ENCODE measurements at regions of chr1 and their contacts with region 1.

Region 1: DNA sequence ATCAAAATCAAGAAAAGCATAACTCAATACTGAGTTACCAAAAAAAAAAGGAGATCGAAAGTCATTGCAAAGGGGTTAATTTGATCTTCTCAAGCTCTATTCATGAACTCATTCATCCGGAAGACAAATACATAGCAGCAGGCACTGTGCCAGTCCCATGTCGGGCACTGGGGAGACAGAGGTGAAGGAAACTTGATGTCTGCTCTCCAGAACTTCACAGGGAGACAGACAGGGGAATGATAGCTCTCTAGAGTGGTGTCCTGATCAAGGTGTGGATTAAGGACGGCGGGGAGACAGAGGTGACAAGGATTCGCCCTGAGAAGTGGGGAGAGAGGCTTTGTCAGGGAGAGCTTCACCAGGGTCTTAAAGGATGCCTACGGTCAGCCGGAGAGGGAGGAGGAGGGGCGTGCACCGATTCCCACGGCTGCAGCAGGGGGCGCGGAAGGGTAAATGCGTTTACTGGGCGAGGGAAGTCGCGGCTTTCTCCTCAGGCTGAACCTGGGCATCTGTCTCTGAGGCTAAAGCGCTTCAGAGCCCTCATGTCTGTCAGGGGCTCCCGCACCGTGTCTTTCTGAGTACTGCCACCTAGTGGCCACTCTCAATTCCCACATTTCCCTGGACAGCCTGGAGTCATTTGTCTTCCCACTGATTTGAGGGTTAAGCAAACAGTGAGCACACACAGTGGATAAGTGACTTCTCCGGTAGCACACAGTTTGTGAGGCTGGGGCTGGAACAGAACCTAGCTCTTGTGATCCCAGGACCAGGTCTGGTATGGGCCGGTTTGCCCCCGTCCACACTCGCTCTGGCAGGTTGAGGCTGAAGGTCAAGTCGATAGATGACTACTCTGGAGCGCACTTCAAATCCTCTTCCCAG is 152.8 kb downstream of the TENT5C start:
- DNase-seq: peak in 1 of 2 donors; percentile 61
- H3K4me3 ChIP-seq: no peak overlapping the region
- CTCF ChIP-seq: peak in 1 of 3 donors; percentile 65
- POLR2A ChIP-seq: no peak

Region 2: GRCh38 chr1:117534995-117535467 is 223.6 kb before region 1 on chr1:
- intact Hi-C with region 1: loop called (anchors 10 kb)
- DNase-seq: no peak
- H3K4me3 ChIP-seq: no peak overlapping the region
- CTCF ChIP-seq: no peak
- POLR2A ChIP-seq: no peak

Region 3: DNA sequence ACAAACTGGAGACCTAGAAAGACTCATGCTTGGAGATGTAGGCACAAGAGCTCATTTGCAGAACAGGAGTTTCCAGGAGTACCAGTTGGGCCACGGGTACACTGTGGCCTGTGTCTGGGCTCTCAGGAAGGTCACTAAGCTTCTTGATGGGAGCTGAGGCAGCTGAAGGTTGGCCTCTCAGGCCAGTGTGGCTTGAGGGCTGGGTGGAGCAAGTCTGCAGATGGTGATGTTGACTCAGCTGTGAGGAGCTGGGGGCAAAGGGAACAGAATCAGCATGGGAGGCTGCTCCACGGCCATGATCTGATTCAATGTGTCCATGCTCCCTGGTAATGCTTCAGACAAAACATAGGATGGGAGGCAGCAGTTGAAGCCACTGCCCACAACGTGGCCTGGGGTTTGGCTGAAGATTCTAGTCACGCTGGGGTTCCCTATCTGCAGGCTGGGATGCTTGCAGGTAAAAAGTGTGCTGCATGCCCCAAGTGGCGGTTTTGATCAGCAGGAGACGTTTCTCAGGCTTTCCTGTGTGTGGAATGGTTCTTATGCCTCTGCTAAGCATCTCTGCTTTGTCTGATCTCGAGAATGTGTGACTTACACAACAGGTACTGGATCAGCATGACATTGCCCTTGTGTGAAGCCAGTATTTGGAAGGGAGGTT is 168.3 kb before region 1 on chr1:
- intact Hi-C with region 1: no loop called
- DNase-seq: no peak
- H3K4me3 ChIP-seq: no peak overlapping the region
- CTCF ChIP-seq: no peak
- POLR2A ChIP-seq: no peak

Region 4: DNA sequence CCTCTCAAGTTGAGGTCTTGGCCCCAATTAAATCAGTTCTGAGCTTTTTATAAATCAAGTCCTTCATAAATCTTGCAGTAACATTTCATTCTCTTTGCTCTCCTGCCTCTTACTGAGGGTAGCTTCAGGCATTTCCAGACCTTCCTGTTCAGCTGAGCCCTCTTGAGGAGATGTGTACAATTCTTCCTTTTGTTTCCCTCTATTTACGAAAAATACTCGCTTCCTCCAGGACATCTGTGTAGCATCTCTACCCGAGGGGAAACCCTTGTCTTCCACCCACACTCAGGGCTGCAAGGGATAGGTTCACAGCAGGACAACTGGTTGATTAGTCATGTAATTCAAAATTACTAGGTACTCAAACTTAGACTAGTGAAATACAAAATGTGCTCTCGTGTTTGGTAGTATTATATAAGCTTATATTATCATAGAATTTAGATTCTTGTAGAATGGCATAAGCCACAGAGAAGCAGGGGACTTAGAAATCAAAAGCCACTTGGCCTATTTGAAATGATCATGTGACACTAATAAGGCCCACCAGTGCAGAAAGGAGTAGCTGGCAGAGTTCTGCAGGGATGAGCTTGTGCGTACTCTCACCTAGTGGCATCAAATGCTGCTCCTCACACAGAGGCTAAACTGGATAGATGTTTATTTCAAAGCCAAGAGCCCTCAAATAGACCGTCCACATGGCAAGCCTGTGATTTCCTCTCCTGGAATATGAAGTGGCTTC is 44.0 kb after region 1 on chr1:
- intact Hi-C with region 1: no loop called
- DNase-seq: no peak
- H3K4me3 ChIP-seq: no peak overlapping the region
- CTCF ChIP-seq: no peak
- POLR2A ChIP-seq: no peak